ENCODE measurements at regions of chr6 and their contacts with region 1.

Region 1: GRCh38 chr6:157550114-157550989 is 169.4 kb downstream of the ZDHHC14 start:
- DNase-seq: no peak
- H3K4me3 Mint-ChIP-seq: no peak overlapping the region
- H3K27ac Mint-ChIP-seq: peak overlapping the region; percentile 73
- H3K4me1 Mint-ChIP-seq: peaks cover 30% of the 10 kb centered on the region
- H3K27me3 Mint-ChIP-seq: no peaks in the 10 kb centered on the region
- CTCF ChIP-seq: no peak

Region 2: DNA sequence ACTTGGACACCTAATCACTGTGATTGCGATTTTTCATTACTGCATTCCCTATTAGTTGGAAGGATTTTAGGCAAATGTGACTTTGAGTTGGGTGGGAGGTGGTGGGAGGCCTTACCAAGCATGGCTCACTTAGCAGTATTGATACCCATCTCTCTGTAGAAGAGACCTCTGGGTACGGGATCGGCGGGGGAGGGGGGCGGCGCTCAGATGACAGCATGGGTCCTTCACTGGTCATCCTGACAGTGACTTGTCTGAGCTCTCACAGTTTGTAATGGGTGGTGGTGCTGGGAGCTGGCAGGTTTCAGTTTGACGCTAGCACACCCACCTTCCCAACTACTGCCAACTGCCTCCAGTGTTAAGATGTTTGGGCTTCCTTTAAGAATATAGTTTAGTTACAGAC is 541.8 kb before region 1 on chr6:
- CTCF ChIA-PET with region 1: no interaction called
- intact Hi-C with region 1: no loop called
- DNase-seq: no peak
- H3K4me3 Mint-ChIP-seq: no peak overlapping the region
- H3K27ac Mint-ChIP-seq: no peak overlapping the region
- H3K4me1 Mint-ChIP-seq: no peaks in the 10 kb centered on the region
- H3K27me3 Mint-ChIP-seq: no peaks in the 10 kb centered on the region
- CTCF ChIP-seq: no peak

Region 3: GRCh38 chr6:157789861-157790260 is 239.5 kb after region 1 on chr6:
- CTCF ChIA-PET with region 1: no interaction called
- intact Hi-C with region 1: loop called (anchors 5 kb)
- DNase-seq: no peak
- H3K4me3 Mint-ChIP-seq: no peak overlapping the region
- H3K27ac Mint-ChIP-seq: no peak overlapping the region
- H3K4me1 Mint-ChIP-seq: no peaks in the 10 kb centered on the region
- H3K27me3 Mint-ChIP-seq: no peaks in the 10 kb centered on the region
- CTCF ChIP-seq: no peak

Measured in Calu3 (cell line).